Heart left ventricle (tissue), 16 donors: ENCODE measurements at regions of chr15 and their contacts with region 1.

Region 1: DNA sequence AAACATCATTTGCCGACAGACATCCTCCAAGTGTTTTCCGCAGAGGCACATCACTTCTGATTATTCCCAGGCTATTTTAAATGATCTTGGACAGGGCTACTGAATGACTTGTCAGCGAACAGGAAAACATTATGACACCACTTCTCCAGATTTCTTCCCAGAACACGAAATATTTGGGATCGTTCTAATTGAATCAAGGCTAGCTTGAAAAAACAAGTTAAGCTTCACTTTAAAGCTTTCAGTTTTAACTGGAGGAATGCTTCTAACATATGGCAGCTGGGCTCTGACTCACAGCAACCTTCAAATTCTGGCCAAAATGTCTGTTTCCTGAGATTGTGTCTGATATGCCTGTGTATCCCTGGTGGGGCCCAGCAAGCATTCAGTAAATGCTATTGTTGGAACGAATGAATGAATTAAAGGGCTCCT is 127.0 kb upstream of the ICE2 start:
- DNase-seq: peak in 4 of 5 donors; percentile 52 to 66 (median 59)
- ATAC-seq: peak; percentile 78 to 97 (median 92)
- H3K4me3 ChIP-seq: peak overlapping the region in 10 of 12 donors; percentile 6 to 42 (median 30)
- H3K27ac ChIP-seq: peak overlapping the region; percentile 21 to 72 (median 56)
- H3K4me1 ChIP-seq: peaks cover 0 to 31% (median 6%) of the 10 kb centered on the region in 12 donors
- H3K27me3 ChIP-seq: no peaks in the 10 kb centered on the region
- CTCF ChIP-seq: no peak
- POLR2A ChIP-seq: no peak

Region 2: DNA sequence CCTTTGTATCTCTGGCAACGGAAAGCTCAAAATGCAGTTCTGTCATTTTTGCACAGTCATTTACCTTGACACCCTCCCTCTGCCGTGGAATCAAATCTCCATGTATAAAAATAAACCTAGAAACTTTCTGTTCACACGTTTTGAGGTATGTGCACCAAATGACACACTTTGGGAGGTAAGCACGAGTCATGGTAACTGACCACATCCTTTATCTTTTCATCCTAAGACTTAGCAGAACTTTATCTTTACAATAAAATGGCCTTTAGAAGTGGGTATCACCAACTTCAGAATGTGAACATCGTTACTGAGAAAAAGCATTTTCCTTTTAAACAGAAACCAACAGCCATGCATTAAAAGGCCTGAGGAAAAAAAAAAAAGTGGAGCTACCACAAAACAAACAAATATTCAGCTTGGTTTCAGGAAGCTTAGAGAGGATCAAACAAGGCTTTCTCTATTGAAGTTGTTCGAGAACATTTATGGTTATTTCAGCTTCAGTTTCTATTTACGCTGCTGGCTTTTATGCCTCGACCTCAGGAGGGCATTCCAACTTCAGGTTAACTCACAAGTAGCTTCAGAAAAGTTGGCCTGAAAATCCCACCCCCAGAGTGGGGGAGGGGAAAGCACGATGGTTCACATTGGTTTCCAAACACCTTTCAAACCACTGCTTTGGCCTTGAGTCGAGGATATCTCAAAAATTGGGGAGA is 44.1 kb after region 1 on chr15:
- intact Hi-C with region 1: loop called in 1 of 10 experiments (anchors 5 kb)
- DNase-seq: no peak
- ATAC-seq: no peak
- H3K4me3 ChIP-seq: no peak overlapping the region
- H3K27ac ChIP-seq: peak overlapping the region in 1 of 12 donors; percentile 24
- H3K4me1 ChIP-seq: peaks cover 0 to 6% (median 0%) of the 10 kb centered on the region in 12 donors
- H3K27me3 ChIP-seq: no peaks in the 10 kb centered on the region
- CTCF ChIP-seq: no peak
- POLR2A ChIP-seq: no peak

Region 3: GRCh38 chr15:60713119-60714084 is 107.5 kb after region 1 on chr15:
- intact Hi-C with region 1: loop called in 1 of 10 experiments (anchors 10 kb)
- DNase-seq: peak in 1 of 5 donors; percentile 15
- ATAC-seq: peak; percentile 54 to 96 (median 92)
- H3K4me3 ChIP-seq: no peak overlapping the region
- H3K27ac ChIP-seq: peak overlapping the region in 11 of 12 donors; percentile 9 to 60 (median 50)
- H3K4me1 ChIP-seq: peaks cover 0 to 19% (median 10%) of the 10 kb centered on the region in 12 donors
- H3K27me3 ChIP-seq: no peaks in the 10 kb centered on the region
- CTCF ChIP-seq: no peak
- POLR2A ChIP-seq: no peak

Region 4: GRCh38 chr15:60751985-60752952 is 146.4 kb after region 1 on chr15:
- intact Hi-C with region 1: loop called in 3 of 10 experiments (anchors 5 to 10 kb)
- DNase-seq: peak in 4 of 5 donors; percentile 45 to 67 (median 52)
- ATAC-seq: peak; percentile 92 to 95 (median 92)
- H3K4me3 ChIP-seq: peak overlapping the region in 9 of 12 donors; percentile 3 to 44 (median 25)
- H3K27ac ChIP-seq: peak overlapping the region; percentile 6 to 81 (median 60)
- H3K4me1 ChIP-seq: peaks cover 0 to 22% (median 12%) of the 10 kb centered on the region in 12 donors
- H3K27me3 ChIP-seq: no peaks in the 10 kb centered on the region
- CTCF ChIP-seq: no peak
- POLR2A ChIP-seq: no peak